ENCODE measurements at regions of chr5 and their contacts with region 1.

Region 1: GRCh38 chr5:148730943-148731861 is 76.9 kb upstream of the HTR4 start:
- DNase-seq: peak; percentile 49
- CTCF ChIP-seq: peak; percentile 81

Region 2: GRCh38 chr5:148033146-148033545 is 698.1 kb before region 1 on chr5:
- in situ Hi-C with region 1: no loop called
- DNase-seq: no peak
- CTCF ChIP-seq: no peak

Region 3: DNA sequence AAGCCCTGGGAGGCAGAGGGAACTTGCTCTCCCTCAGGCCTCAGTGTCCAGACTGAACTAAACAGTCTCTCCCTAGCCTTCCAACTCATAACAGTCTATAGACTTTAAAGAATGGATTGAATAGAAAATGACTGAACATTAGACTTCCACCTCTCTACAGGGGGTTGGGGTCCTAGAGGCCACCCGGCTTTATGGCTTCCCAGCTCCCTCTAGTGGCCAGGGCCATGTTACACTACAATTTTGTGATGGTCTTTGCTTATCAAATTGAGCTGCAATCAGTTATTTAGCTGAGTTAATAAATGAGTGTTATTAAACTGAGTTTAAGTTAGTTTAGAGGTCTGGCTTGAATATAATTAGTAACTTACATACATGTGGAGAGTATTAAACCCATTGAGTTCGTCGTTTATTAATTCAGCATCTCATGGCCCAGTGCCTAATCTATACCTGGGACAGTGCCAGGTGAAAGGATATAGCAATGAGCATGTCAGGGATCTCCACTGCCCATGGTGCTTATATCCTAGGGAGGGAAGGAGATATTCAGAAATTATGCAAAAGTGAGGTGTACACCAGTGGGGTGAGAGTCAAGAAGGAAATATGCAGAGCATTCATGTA is 226.5 kb after region 1 on chr5:
- in situ Hi-C with region 1: loop called (anchors 25 kb)
- DNase-seq: peak; percentile 57
- CTCF ChIP-seq: peak; percentile 80

Region 4: DNA sequence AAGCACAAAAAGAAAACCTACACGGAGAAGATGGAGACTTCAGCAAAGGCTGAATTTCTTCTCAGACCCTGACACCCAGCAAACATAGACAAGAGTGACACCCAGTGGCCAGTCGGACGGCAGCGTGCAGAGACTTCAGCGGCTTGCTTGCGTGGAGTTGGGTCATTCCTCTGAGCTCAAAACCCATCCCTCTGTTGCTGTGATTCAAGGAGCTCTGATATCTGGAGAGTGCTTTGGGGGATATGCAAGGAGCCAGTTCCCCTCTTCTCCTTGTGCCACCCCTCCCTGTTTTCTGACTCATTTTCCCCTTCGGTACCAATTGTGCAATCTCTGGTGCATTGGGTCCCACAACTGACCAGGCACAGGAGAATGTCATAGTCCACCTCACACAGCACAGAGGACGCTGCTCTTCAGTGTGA is 304.2 kb after region 1 on chr5:
- in situ Hi-C with region 1: loop called (anchors 25 kb)
- DNase-seq: peak; percentile 54
- CTCF ChIP-seq: peak; percentile 81

Region 5: DNA sequence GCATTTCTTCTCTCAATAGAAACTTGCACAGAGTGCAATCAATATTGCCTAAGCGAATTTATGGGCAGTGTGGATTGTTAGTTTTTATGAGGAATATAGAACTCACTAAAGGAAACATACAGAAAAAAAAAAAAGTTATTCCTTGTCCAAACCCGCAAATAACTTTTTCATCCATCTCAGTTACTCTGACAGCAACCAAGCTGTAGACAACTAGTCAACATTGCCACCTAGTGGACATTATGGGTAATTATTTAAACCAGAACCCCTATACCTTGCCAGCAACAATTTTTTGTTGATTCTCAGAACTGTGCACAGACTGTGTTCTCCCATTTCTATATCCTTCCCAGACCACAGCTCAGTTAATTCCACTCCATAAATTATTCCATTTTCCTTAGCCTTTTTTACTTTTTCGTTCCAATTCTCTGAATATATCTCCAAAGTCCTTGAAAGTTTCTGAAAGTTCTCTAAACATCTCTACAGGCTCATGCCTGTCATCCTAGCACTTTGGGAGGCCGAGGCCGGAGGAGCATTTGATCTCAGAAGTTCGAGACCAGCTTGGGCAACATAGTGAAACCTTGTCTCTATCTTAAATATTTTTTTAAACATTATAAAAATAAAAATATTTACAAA is 537.8 kb after region 1 on chr5:
- in situ Hi-C with region 1: loop called (anchors 25 kb)
- DNase-seq: peak; percentile 79
- CTCF ChIP-seq: peak; percentile 46

Measured in GM13976 (cell line).